ENCODE measurements at regions of chr4 and their contacts with region 1.

Region 1: DNA sequence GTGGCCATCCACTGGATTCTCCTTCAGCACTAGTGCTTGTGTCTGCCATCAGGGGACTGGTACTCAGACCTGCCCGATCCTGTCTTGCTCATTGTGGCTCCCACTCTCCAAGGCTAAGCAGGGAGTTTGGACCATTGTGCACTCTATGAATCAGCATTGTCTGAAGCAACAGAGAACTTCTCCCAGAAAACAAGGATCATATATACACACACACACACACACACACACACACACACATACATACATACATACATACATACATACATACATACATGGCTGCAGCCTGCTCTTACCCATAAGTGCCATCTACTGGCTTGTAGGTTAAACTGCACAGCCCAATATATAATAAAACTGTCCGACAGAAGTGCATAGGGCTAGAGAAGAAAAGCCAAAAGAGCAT is 345.3 kb upstream of the LCORL start:
- DNase-seq: peak; percentile 7
- H3K4me3 Mint-ChIP-seq: no peak overlapping the region
- H3K27ac Mint-ChIP-seq: no peak overlapping the region
- H3K4me1 Mint-ChIP-seq: no peaks in the 10 kb centered on the region
- H3K27me3 Mint-ChIP-seq: peaks cover 14% of the 10 kb centered on the region

Region 2: GRCh38 chr4:17817020-17817419 is 549.9 kb before region 1 on chr4:
- CTCF ChIA-PET with region 1: interaction called, 3 read pairs
- intact Hi-C with region 1: loop called (anchors 1 kb)
- DNase-seq: no peak
- H3K4me3 Mint-ChIP-seq: no peak overlapping the region
- H3K27ac Mint-ChIP-seq: no peak overlapping the region
- H3K4me1 Mint-ChIP-seq: peaks cover 12% of the 10 kb centered on the region
- H3K27me3 Mint-ChIP-seq: no peaks in the 10 kb centered on the region

Region 3: DNA sequence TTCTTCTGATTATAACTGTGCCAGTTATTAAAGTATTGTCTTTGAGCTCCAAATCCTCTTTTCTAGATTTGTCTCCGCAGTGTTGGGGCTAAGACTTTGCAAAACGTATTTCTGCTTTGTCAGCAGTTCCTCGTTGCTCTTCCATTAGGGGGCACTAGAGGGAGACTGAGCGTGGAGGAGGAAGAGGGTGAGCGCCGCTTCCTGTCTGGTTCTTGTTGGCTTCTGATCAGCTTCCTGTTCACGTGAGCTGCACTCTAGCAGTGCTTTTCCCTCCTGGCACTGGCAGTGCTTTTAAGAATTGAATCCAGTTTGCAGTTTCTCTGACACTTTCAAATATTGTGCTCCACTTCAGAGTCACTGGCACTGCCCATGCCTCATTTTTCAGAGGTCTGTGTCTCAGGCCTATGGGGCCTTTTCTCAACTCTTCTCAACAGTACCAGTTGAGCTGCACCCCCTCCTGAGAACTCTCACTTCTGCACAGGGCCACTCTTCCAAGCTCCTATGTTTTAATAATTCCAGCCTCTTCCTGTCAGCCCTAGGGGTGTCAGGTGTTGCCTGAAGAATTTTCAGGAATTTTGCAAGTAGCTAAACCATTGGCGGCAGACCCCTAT is 291.0 kb before region 1 on chr4:
- CTCF ChIA-PET with region 1: interaction called, 4 read pairs
- intact Hi-C with region 1: loop called (anchors 10 kb)
- DNase-seq: peak; percentile 54
- H3K4me3 Mint-ChIP-seq: no peak overlapping the region
- H3K27ac Mint-ChIP-seq: no peak overlapping the region
- H3K4me1 Mint-ChIP-seq: peaks cover 7% of the 10 kb centered on the region
- H3K27me3 Mint-ChIP-seq: peaks cover 21% of the 10 kb centered on the region

Region 4: GRCh38 chr4:19358015-19358414 is 991.1 kb after region 1 on chr4:
- CTCF ChIA-PET with region 1: no interaction called
- intact Hi-C with region 1: no loop called
- DNase-seq: no peak
- H3K4me3 Mint-ChIP-seq: no peak overlapping the region
- H3K27ac Mint-ChIP-seq: no peak overlapping the region
- H3K4me1 Mint-ChIP-seq: no peaks in the 10 kb centered on the region
- H3K27me3 Mint-ChIP-seq: no peaks in the 10 kb centered on the region